ENCODE measurements at regions of chr9 and their contacts with region 1.

Region 1: DNA sequence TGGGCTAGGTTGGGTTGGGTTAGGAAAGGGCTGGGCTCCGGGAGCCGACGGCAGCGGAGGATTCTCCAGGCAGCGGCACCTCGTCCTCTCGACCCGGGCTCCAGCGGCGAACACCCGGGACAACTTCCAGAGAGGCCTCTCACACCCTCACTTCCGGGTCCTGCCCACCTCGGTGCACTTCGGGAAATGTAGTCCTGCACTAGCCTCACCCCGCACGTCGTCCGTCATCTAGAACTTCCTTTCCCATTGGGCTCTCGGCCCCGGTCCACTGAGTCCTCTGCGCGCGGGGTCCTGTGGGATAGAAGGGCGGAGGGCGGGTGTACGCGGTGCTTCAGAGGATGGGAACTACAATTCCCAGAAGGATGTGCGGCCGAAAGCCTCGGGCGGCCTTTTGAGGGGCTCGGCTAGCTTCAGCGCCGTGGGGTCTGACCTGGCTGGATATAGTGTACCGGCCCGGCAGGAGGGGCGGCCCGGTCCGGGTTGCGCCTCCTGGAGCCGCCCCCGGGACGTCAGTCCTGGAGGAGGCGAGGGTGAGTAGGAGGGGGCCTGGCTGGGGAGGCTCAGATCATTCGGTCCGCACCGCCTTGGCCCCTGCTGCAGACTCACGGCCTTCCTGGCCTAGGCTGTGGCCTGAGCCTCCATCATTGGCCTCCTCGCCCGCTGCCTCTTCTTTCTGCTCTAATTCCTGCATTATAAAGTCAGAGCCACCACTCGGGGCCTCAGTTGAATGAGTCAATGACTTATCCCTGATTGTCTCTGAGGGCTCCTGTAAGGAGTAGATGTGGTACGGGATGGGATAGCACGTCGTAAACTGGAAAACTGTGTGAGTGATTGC is at the starts of genes ERP44 and INVS:
- DNase-seq: peak; percentile 98
- ATAC-seq: peak; percentile 99
- H3K4me3 ChIP-seq: peak within 1 kb of the TSS; percentile 79 to 98 (median 95)
- H3K4me3 Mint-ChIP-seq: peak within 1 kb of the TSS; percentile 99
- H3K27ac ChIP-seq: peak within 1 kb of the TSS; percentile 77 to 90
- H3K27ac Mint-ChIP-seq: peak within 1 kb of the TSS; percentile 98
- H3K4me1 ChIP-seq: peaks cover 24 to 27% of the 10 kb centered on the region in 2 donors
- H3K4me1 Mint-ChIP-seq: peaks cover 41% of the 10 kb centered on the region
- H3K27me3 ChIP-seq: no peaks in the 10 kb centered on the region
- H3K27me3 Mint-ChIP-seq: no peaks in the 10 kb centered on the region
- CTCF ChIP-seq: no peak
- total RNA-seq, gene ERP44: 16.9 and 18.4 TPM in 2 replicates
- total RNA-seq, gene INVS: 34.6 and 37.0 TPM in 2 replicates

Region 2: DNA sequence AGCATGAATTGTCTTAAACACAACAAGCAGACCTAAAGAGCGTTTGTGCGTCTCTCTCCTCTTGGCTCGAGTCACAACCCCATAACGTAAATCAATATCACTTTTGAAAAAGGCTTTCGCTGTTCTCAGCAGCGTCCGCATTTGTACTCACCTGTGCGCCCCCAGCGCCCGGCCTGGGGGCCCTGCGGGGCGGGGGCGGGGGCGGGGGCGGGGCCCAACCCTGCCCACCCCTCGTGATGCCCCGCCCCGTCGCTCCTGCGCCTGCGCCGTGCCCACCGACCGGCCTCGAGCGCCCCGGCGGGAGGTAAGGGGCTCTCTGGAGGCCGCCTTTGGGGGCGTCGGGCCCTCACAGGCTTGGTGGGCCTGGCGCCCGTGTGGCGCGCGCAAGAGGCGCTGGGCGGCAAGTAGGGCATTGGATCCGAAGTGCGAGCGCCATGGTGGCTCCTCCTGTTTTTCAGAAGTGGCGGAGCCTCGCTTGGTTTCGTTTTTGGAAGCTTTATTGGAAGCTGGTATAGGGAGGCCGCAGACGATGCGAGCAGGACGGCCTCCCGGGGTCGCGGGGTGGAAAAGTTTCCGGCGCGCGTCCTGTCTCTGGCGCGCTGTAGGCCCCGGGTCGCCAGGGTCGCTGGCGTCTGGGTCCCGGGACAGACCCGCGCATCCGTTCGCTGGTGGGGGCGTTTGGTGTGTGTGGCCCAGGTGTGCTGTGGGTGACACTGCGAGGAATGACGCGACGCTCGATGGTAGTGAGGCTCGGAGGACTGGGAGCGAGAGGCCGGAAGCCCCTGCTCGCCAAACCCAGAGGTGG is 192.5 kb before region 1 on chr9 and contains the start of gene STX17:
- CTCF ChIA-PET with region 1: no interaction called
- POLR2A ChIA-PET with region 1: no interaction called
- intact Hi-C with region 1: loop called (anchors 1 kb)
- DNase-seq: peak; percentile 93
- ATAC-seq: peak; percentile 88
- H3K4me3 ChIP-seq: peak within 1 kb of the TSS; percentile 75 to 98 (median 97)
- H3K4me3 Mint-ChIP-seq: peak within 1 kb of the TSS; percentile 99
- H3K27ac ChIP-seq: peak within 1 kb of the TSS; percentile 91 to 96
- H3K27ac Mint-ChIP-seq: peak within 1 kb of the TSS; percentile 98
- H3K4me1 ChIP-seq: peaks cover 4 to 14% of the 10 kb centered on the region in 2 donors
- H3K4me1 Mint-ChIP-seq: peaks cover 17% of the 10 kb centered on the region
- H3K27me3 ChIP-seq: peaks cover 0 to 3% (median 0%) of the 10 kb centered on the region in 4 experiments
- H3K27me3 Mint-ChIP-seq: no peaks in the 10 kb centered on the region
- CTCF ChIP-seq: no peak
- total RNA-seq, gene STX17: 40.2 and 42.9 TPM in 2 replicates

Region 3: DNA sequence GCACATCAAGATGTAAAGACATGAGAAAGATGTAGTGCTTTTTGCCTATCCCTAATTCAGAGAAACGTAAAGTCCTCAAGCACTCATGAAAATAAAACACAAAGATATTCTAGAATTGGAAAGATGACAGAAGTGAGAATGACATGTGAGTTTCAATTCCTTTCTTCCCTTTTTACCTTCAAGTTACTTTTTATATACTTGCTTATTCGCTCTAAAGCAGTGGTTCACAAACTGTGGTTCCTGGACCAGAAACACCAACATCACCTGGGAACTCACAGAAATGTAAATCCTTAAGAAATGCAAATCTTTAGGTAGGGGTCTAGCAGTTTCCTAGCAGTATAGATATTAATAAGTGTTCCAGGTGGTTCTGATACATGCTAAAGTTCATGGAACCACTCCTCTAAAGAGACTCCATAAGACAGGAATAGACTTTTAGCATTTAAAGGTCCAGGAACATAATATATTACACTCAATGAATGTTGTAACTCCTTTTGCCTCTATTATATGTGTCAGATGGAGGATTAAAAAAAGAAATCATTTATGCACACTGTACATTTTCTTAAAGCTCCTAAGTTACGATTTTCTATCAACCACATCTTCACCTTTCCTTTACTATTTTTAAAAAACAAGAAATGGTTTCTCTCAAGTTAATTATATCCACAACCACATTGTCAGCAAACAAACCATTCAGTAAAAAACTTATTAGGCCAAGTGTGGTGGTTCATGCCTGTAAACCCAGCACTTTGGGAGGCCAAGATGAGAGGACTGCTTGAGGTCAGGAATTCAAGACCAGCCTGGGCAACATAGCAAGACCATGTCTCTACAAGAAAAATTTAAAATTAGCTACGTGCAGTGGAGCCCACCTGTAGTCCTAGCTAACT is 40.2 kb before region 1 on chr9:
- CTCF ChIA-PET with region 1: interaction called, 3 read pairs
- POLR2A ChIA-PET with region 1: no interaction called
- intact Hi-C with region 1: loop called (anchors 2 kb)
- DNase-seq: peak; percentile 71
- ATAC-seq: peak; percentile 75
- H3K4me3 ChIP-seq: peak overlapping the region in 1 of 5 experiments; percentile 15
- H3K4me3 Mint-ChIP-seq: peak overlapping the region; percentile 80
- H3K27ac ChIP-seq: peak overlapping the region; percentile 58 to 61
- H3K27ac Mint-ChIP-seq: peak overlapping the region; percentile 75
- H3K4me1 ChIP-seq: peaks cover 32 to 44% of the 10 kb centered on the region in 2 donors
- H3K4me1 Mint-ChIP-seq: peaks cover 53% of the 10 kb centered on the region
- H3K27me3 ChIP-seq: no peaks in the 10 kb centered on the region
- H3K27me3 Mint-ChIP-seq: no peaks in the 10 kb centered on the region
- CTCF ChIP-seq: no peak

Region 4: DNA sequence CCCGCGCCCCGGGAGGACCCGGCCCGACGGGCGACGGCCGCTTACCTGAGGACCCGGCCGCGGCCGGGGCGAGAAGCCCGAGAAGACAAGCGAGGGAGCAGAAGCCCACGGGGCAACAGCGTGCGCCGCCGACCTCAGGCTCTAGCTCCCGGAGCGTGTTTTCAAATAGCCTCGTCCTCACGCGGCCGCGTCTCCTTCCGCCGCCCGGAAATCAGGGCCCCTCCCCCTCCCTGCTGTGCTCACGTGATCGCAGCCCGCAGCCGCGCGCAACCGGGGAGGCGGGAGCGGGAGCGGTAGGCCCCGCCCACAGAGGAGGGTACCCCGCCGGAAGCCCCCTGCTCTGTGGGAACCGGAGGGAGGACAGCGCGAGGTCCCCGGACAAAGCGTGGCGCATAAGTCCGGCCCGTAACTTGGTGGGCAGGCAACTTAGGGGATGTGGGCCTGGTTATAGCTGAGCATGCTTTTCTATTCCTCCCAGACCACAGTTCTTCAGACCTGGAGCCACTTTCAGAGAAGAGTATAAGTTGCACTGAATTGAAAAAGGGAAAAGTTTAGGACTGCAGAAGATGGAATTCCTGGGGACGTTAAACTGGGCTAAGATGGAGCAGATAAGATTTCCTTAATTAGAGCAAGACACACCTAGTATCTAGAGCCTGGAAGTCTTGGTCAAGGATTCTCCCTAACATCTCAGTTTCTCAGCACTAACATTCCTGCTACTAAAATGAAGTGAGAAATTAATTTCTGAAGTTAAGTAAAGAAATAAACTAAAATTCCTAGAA is 253.8 kb after region 1 on chr9 and contains the start of gene TEX10:
- CTCF ChIA-PET with region 1: no interaction called
- POLR2A ChIA-PET with region 1: no interaction called
- intact Hi-C with region 1: loop called (anchors 1 kb)
- DNase-seq: peak; percentile 93
- ATAC-seq: peak; percentile 93
- H3K4me3 ChIP-seq: peak within 1 kb of the TSS; percentile 53 to 94 (median 92)
- H3K4me3 Mint-ChIP-seq: peak within 1 kb of the TSS; percentile 93
- H3K27ac ChIP-seq: peak within 1 kb of the TSS; percentile 58 to 90
- H3K27ac Mint-ChIP-seq: peak within 1 kb of the TSS; percentile 83
- H3K4me1 ChIP-seq: peaks cover 35% of the 10 kb centered on the region in 2 donors
- H3K4me1 Mint-ChIP-seq: peaks cover 69% of the 10 kb centered on the region
- H3K27me3 ChIP-seq: no peaks in the 10 kb centered on the region
- H3K27me3 Mint-ChIP-seq: no peaks in the 10 kb centered on the region
- CTCF ChIP-seq: no peak
- total RNA-seq, gene TEX10: 24.9 and 27.6 TPM in 2 replicates

Region 5: GRCh38 chr9:100598641-100599145 is 499.6 kb after region 1 on chr9:
- CTCF ChIA-PET with region 1: no interaction called
- POLR2A ChIA-PET with region 1: no interaction called
- intact Hi-C with region 1: loop called (anchors 5 kb)
- DNase-seq: peak; percentile 85
- ATAC-seq: peak; percentile 87
- H3K4me3 ChIP-seq: peak overlapping the region; percentile 49 to 79 (median 61)
- H3K4me3 Mint-ChIP-seq: peak overlapping the region; percentile 76
- H3K27ac ChIP-seq: peak overlapping the region in 1 of 2 donors; percentile 17
- H3K27ac Mint-ChIP-seq: peak overlapping the region; percentile 4
- H3K4me1 ChIP-seq: peaks cover 11 to 13% of the 10 kb centered on the region in 2 donors
- H3K4me1 Mint-ChIP-seq: peaks cover 23% of the 10 kb centered on the region
- H3K27me3 ChIP-seq: no peaks in the 10 kb centered on the region
- H3K27me3 Mint-ChIP-seq: no peaks in the 10 kb centered on the region
- CTCF ChIP-seq: no peak

Measured in B cell (primary cell).